Panc1 (cell line): ENCODE measurements at regions of chr10 and their contacts with region 1.

Region 1: GRCh38 chr10:67779465-67780203 is 58.4 kb downstream of the DNAJC12 start:
- DNase-seq: peak; percentile 64
- ATAC-seq: peak; percentile 83
- H3K4me3 ChIP-seq: no peak overlapping the region
- H3K27ac ChIP-seq: no peak overlapping the region
- H3K4me1 ChIP-seq: no peaks in the 10 kb centered on the region
- H3K27me3 ChIP-seq: no peaks in the 10 kb centered on the region
- CTCF ChIP-seq: peak; percentile 87

Region 2: DNA sequence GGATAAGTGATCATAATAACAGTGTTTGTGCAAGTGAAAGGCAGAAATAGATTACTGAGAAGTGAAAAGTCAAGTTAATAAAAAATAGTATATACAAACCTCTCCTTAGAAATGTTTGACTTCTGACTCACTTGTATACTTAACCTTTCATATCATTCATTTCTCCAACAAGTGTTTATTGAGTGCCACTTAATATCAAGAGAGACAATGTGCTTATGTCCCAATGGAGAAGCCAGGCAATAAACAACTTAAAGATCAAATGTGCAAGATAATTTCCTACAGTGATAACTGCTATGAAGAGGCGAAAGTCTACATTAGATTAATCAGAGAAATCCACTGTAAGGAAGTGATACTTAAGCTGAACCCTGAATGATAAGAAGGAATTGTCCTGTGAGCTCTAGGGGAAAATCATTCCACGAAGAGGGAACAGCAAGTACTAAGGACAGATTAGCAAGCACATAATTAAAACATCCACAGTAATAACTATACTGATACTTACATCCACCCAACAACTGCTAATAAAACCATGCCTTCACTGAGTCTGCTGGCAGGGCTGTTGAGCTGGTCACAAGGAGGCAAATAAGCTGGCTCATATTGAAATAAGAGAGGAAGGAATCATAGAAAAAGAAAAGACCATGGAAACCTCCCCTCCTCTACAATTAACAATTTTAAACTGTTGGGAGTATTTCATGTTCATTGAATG is 287.2 kb before region 1 on chr10:
- CTCF ChIA-PET with region 1: no interaction called
- POLR2A ChIA-PET with region 1: no interaction called
- in situ Hi-C with region 1: no loop called
- intact Hi-C with region 1: no loop called
- DNase-seq: no peak
- ATAC-seq: peak; percentile 93
- H3K4me3 ChIP-seq: no peak overlapping the region
- H3K27ac ChIP-seq: peak overlapping the region; percentile 26; the same call in 1 of the 2 replicates
- H3K4me1 ChIP-seq: peaks cover 8% of the 10 kb centered on the region; the same call in 1 of the 2 replicates
- H3K27me3 ChIP-seq: no peaks in the 10 kb centered on the region
- CTCF ChIP-seq: no peak

Region 3: DNA sequence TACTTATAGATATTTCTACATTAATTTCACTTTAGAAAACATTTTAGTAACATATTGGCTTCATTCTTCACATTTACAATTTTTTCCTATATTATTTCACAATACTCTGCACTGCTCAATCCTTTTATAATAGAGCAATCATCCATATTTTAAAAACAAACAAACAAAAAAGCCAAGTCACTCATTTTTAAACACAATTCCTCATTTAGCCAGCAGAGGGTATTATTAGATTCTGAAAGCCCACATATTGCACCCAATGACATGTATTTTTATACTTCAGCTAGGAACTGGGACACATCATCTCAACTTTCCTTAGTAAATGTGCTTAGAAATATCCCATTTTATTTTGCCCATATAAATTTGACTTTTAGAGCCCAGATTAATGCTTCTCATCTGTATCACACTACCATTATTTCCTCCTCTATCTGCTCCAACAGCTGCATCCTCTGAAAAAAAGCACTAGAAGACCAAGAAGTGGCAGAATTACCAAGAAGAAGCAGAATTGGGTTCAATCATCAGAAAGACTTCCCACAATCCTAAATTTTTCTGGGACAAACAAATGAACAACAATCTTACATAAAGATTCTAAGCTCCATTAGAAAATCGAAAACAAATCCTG is 113.1 kb before region 1 on chr10:
- CTCF ChIA-PET with region 1: interaction called, 4 read pairs
- POLR2A ChIA-PET with region 1: no interaction called
- in situ Hi-C with region 1: no loop called
- intact Hi-C with region 1: loop called (anchors 1 kb)
- DNase-seq: peak; percentile 36
- ATAC-seq: peak; percentile 62; the same call in 1 of the 2 replicates
- H3K4me3 ChIP-seq: no peak overlapping the region
- H3K27ac ChIP-seq: peak overlapping the region; percentile 12; the same call in 1 of the 2 replicates
- H3K4me1 ChIP-seq: peaks cover 10% of the 10 kb centered on the region; the same call in 1 of the 2 replicates
- H3K27me3 ChIP-seq: no peaks in the 10 kb centered on the region
- CTCF ChIP-seq: peak; percentile 66; the same call in 1 of the 2 replicates

Region 4: GRCh38 chr10:67697724-67698131 is 81.9 kb before region 1 on chr10:
- CTCF ChIA-PET with region 1: interaction called, 34 read pairs
- POLR2A ChIA-PET with region 1: no interaction called
- in situ Hi-C with region 1: no loop called
- intact Hi-C with region 1: loop called (anchors 2 kb)
- DNase-seq: peak; percentile 35
- ATAC-seq: peak; percentile 94
- H3K4me3 ChIP-seq: no peak overlapping the region
- H3K27ac ChIP-seq: no peak overlapping the region
- H3K4me1 ChIP-seq: no peaks in the 10 kb centered on the region
- H3K27me3 ChIP-seq: peaks cover 35% of the 10 kb centered on the region
- CTCF ChIP-seq: peak; percentile 84

Region 5: DNA sequence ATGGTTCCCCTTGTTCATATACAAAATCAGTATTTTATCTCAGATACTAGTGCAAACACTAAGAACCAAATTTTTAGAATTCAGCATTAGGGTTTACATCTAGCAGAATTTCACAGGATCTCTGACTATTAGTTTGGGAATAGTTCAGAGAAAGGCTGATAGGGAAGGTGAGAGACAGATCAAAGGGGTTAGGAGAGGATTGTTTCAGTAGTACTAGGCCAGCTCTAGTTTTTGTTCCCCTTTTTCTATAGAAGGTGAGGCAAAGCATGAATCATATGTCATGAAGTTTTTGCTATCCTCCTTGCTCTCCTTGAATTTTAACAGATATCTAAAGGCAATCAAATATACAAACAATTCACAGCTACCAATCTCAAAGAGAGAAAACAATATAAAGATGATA is 57.5 kb before region 1 on chr10:
- CTCF ChIA-PET with region 1: interaction called, 15 read pairs
- POLR2A ChIA-PET with region 1: no interaction called
- in situ Hi-C with region 1: no loop called
- intact Hi-C with region 1: no loop called
- DNase-seq: no peak
- ATAC-seq: no peak
- H3K4me3 ChIP-seq: no peak overlapping the region
- H3K27ac ChIP-seq: no peak overlapping the region
- H3K4me1 ChIP-seq: no peaks in the 10 kb centered on the region
- H3K27me3 ChIP-seq: peaks cover 3% of the 10 kb centered on the region; the same call in 1 of the 2 replicates
- CTCF ChIP-seq: no peak